ENCODE measurements at regions of chr11 and their contacts with region 1.

Region 1: GRCh38 chr11:57644748-57645688 is 4.7 kb downstream of the YPEL4 start:
- DNase-seq: no peak
- H3K4me3 ChIP-seq: no peak overlapping the region
- CTCF ChIP-seq: peak; percentile 82

Region 2: GRCh38 chr11:57480409-57481137 is 164.4 kb before region 1 on chr11:
- CTCF ChIA-PET with region 1: interaction called, 11 read pairs
- POLR2A ChIA-PET with region 1: no interaction called
- DNase-seq: no peak
- H3K4me3 ChIP-seq: no peak overlapping the region
- CTCF ChIP-seq: peak; percentile 83

Region 3: GRCh38 chr11:57530596-57531507 is 114.2 kb before region 1 on chr11 and contains the start of gene TIMM10:
- CTCF ChIA-PET with region 1: interaction called, 115 read pairs
- POLR2A ChIA-PET with region 1: interaction called, 3 read pairs
- DNase-seq: peak; percentile 68
- H3K4me3 ChIP-seq: peak within 1 kb of the TSS; percentile 96
- CTCF ChIP-seq: no peak

Region 4: GRCh38 chr11:57567515-57568329 is 77.3 kb before region 1 on chr11 and contains the start of gene UBE2L6:
- CTCF ChIA-PET with region 1: interaction called, 306 read pairs
- POLR2A ChIA-PET with region 1: interaction called, 12 read pairs
- DNase-seq: no peak
- H3K4me3 ChIP-seq: peak within 1 kb of the TSS; percentile 89
- CTCF ChIP-seq: peak; percentile 64

Region 5: DNA sequence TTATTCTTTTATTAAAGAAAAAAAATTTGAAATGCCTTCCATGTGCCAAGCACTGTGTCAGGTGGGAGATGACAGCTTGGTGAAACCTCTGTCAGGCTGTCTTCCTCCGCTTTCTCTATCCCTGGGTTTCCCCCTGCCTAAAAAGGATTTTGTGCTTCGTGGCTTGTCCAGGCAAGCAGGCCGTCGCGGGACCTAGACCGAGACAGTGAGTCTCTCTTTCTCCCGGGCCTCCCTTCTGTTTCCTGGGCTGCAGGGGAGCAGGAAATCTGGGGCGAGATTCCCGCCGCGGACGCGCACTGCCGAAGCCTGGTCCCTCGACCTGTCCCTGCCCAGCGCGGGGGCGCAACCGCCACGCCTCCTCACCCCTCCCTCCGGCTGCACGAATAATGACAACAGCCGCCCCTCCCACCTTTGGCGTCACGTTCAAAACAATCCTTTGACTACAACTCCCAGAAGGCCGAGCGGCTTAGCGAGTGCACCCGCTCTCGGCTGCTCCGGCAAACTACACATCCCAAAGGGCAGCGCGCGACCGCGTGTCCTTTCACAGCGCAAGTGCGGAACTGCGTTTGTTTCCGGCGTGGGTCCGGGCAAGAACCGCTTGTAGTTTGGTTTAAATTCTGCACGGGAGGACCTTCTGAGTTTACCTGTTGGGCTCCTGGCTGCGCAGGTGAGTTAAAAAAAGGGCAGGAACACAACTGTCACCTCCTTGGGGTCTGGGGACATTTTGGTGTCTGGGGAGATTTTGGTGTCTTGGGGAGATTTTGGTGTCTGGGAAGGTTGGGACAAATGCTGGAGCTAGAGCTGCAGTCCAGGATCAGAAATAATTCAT is 12.4 kb after region 1 on chr11 and contains the start of gene CLP1:
- CTCF ChIA-PET with region 1: interaction called, 52 read pairs
- POLR2A ChIA-PET with region 1: no interaction called
- DNase-seq: peak; percentile 88
- H3K4me3 ChIP-seq: peak within 1 kb of the TSS; percentile 88
- CTCF ChIP-seq: no peak

Region 6: DNA sequence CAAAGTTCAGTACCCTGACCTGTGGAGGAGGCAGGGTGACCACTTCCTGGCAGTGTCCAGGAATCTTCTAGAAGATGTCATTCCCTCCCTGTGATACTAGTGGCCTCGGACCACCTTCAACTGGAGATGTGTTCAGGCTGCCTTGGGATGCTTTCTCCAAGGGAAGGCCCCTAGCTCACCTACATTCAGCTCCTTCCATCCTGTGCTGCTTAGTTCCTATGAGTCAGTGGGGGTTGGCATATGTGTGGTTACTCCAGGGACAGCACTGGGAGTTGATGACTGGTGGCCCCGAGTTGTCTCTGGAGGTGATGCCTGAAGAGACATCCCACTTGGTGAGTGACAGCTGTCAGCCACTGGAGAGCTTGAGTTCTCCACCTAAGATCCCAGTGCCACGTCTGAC is 296.9 kb after region 1 on chr11:
- CTCF ChIA-PET with region 1: no interaction called
- POLR2A ChIA-PET with region 1: no interaction called
- DNase-seq: no peak
- H3K4me3 ChIP-seq: no peak overlapping the region
- CTCF ChIP-seq: no peak

Region 7: GRCh38 chr11:58006940-58007339 is 361.9 kb after region 1 on chr11:
- CTCF ChIA-PET with region 1: no interaction called
- POLR2A ChIA-PET with region 1: no interaction called
- DNase-seq: no peak
- H3K4me3 ChIP-seq: no peak overlapping the region
- CTCF ChIP-seq: no peak

Measured in AG04449 (cell line).